ENCODE measurements at regions of chr22 and their contacts with region 1.

Region 1: GRCh38 chr22:39236321-39237317 is 8.2 kb downstream of the PDGFB start:
- DNase-seq: peak; percentile 79 to 91 (median 86)
- ATAC-seq: peak; percentile 23 to 56 (median 53)
- H3K4me3 ChIP-seq: peak overlapping the region in 8 of 12 donors; percentile 8 to 38 (median 19)
- H3K27ac ChIP-seq: peak overlapping the region; percentile 84 to 98 (median 94)
- H3K4me1 ChIP-seq: peaks cover 27 to 98% (median 90%) of the 10 kb centered on the region in 12 donors
- H3K27me3 ChIP-seq: peaks cover 0 to 60% (median 0%) of the 10 kb centered on the region in 9 donors
- CTCF ChIP-seq: no peak
- POLR2A ChIP-seq: no peak

Region 2: GRCh38 chr22:39155421-39155820 is 81.2 kb before region 1 on chr22:
- intact Hi-C with region 1: no loop called
- DNase-seq: no peak
- ATAC-seq: no peak
- H3K4me3 ChIP-seq: no peak overlapping the region
- H3K27ac ChIP-seq: no peak overlapping the region
- H3K4me1 ChIP-seq: peaks cover 0 to 26% (median 18%) of the 10 kb centered on the region in 12 donors
- H3K27me3 ChIP-seq: peaks cover 0 to 15% (median 0%) of the 10 kb centered on the region in 9 donors
- CTCF ChIP-seq: no peak
- POLR2A ChIP-seq: no peak

Region 3: DNA sequence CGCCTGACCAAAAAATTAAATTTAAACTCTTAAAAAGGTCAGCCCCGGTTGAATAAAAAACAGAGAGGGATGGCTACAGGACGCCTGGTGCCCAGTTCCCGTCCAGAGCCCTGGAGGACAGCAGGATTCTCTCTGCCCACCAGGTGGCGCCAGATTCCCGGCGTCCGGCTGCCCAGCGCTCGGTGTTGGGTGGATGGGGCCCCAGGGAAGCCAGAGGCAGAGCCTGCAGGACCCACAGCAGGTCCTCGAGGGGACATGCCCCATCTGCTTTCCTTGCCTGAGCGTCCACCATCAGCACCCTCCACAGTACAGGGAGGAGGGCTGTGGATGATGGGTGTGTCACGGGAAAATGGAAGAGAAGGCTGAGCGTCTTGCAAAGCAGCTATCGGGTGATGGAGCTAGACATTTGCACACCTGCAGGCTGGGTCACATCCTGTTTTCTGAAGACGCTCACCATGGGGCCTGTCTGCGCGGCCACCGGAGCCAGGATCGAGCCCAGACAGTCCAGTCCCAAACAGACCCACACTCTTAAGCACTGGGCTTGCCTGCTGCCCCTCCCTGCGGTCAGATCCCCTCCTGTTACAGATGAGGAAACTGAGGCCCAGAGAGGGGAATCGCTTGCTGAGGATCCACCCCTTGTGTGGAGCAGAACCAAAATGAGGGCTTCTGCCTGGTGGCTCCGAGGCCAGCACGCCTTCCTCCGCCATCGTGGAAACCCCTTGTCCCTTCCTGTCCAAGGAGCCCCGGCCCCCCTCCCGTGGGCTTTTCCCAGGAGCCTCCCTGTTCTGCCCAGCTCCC is 65.6 kb before region 1 on chr22:
- intact Hi-C with region 1: loop called in 8 of 10 experiments (anchors 2 to 5 kb)
- DNase-seq: peak; percentile 81 to 93 (median 84)
- ATAC-seq: peak; percentile 76 to 87 (median 83)
- H3K4me3 ChIP-seq: peak overlapping the region in 4 of 12 donors; percentile 1 to 18 (median 10)
- H3K27ac ChIP-seq: peak overlapping the region in 3 of 12 donors; percentile 25 to 42 (median 40)
- H3K4me1 ChIP-seq: peaks cover 33 to 56% (median 47%) of the 10 kb centered on the region in 12 donors
- H3K27me3 ChIP-seq: no peaks in the 10 kb centered on the region
- CTCF ChIP-seq: peak; percentile 94 to 99 (median 96)
- POLR2A ChIP-seq: no peak

Region 4: GRCh38 chr22:39185601-39186014 is 51.0 kb before region 1 on chr22:
- intact Hi-C with region 1: loop called in 1 of 10 experiments (anchors 5 kb)
- DNase-seq: peak; percentile 71 to 91 (median 87)
- ATAC-seq: peak; percentile 87 to 95 (median 92)
- H3K4me3 ChIP-seq: no peak overlapping the region
- H3K27ac ChIP-seq: peak overlapping the region; percentile 17 to 95 (median 78)
- H3K4me1 ChIP-seq: peaks cover 4 to 29% (median 18%) of the 10 kb centered on the region in 12 donors
- H3K27me3 ChIP-seq: no peaks in the 10 kb centered on the region
- CTCF ChIP-seq: peak in 11 of 12 donors; percentile 36 to 77 (median 51)
- POLR2A ChIP-seq: no peak

Region 5: DNA sequence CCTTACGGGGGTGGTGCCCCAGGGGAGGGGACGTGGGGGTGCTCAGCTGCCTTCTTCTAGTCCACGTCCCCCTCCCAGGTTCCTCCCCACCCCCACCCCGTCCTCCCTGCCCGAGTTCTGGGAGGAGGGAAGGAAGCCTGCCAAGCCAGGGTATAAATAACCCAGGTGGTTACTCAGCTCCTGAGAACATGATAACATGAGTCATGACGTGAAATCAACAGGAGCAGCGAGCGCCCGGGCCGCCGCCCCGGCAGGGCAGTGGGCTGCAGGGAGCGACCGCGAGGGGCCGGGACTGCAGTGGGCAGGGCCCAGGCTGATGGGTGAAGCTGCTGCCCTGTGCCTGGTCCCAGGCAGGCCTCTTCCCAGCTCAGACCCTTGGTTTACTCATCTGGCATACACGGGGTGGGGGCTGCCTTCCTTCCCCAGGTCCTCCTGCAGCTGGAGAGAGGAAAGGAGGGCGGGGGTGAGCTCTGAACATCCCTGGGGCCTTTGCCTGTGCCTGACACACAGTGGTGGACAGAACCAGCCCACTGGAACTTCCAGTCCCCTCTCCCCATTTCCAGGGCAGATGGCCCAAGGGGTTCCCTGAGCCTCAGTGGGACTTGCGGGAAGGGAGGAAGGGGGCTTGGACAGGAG is 16.9 kb after region 1 on chr22:
- intact Hi-C with region 1: no loop called
- DNase-seq: peak; percentile 79 to 88 (median 82)
- ATAC-seq: peak; percentile 59 to 85 (median 84)
- H3K4me3 ChIP-seq: peak overlapping the region in 4 of 12 donors; percentile 13 to 24 (median 19)
- H3K27ac ChIP-seq: peak overlapping the region; percentile 53 to 93 (median 84)
- H3K4me1 ChIP-seq: peaks cover 15 to 44% (median 38%) of the 10 kb centered on the region in 12 donors
- H3K27me3 ChIP-seq: peaks cover 0 to 18% (median 0%) of the 10 kb centered on the region in 9 donors
- CTCF ChIP-seq: peak in 2 of 12 donors; percentile 6 to 8
- POLR2A ChIP-seq: peak in 1 of 2 donors; percentile 39

Region 6: DNA sequence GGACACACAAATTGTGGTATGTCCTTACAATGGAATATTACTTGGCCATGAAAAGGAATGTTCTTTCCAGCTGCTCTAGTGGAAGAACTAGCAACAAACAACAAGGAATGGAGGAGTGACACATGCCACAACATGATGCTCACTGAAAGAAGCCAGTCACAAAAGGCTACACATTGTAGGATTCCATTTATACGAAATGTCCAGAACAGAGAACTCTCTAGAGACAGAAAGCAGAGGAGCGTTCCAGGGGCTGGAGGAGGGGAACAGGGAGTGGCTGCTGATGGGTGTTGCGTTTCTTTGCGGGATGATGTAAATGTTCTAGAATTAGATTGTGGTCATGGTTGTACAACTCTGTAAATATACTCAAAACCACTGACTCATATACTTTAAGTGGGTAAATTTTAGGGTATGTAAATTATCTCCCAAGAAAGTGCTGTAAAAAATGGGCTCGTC is 40.6 kb after region 1 on chr22:
- intact Hi-C with region 1: loop called in 2 of 10 experiments (anchors 1 to 5 kb)
- DNase-seq: no peak
- ATAC-seq: no peak
- H3K4me3 ChIP-seq: no peak overlapping the region
- H3K27ac ChIP-seq: peak overlapping the region; percentile 17 to 83 (median 58)
- H3K4me1 ChIP-seq: peaks cover 0 to 61% (median 18%) of the 10 kb centered on the region in 12 donors
- H3K27me3 ChIP-seq: no peaks in the 10 kb centered on the region
- CTCF ChIP-seq: no peak
- POLR2A ChIP-seq: no peak

Region 7: DNA sequence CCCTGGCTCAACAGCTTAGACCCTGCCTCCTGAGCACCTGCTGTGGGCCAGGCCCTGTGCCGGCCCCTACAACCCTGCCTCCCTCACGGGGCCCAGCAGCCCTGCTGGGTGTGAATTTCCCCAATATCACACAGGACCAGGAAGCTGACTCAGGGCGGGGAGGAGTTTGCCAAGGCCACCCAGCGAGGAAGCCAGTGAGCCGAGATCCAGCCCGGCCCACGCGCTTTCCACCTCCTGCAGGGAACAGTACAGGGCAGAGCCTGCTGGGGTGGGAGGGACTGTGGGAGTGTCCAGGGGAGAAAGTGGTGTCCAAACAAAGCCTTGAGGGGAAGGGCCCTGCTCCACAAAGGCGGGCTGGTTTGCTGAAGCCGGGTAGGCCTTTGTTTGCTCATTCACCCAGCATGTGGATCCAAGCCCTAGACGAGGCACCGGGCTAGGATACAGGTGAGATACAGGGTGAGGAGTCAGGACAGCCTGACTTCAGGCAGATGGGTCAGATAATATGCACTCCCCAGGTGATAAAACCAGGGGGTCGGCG is 56.0 kb after region 1 on chr22:
- intact Hi-C with region 1: loop called in 4 of 10 experiments (anchors 5 kb)
- DNase-seq: peak; percentile 94 to 96 (median 95)
- ATAC-seq: peak; percentile 84 to 92 (median 90)
- H3K4me3 ChIP-seq: no peak overlapping the region
- H3K27ac ChIP-seq: peak overlapping the region; percentile 47 to 94 (median 84)
- H3K4me1 ChIP-seq: peaks cover 20 to 53% (median 40%) of the 10 kb centered on the region in 12 donors
- H3K27me3 ChIP-seq: no peaks in the 10 kb centered on the region
- CTCF ChIP-seq: no peak
- POLR2A ChIP-seq: peak in 1 of 2 donors; percentile 51

Region 8: GRCh38 chr22:39300186-39300830 is 63.7 kb after region 1 on chr22:
- intact Hi-C with region 1: loop called in 4 of 10 experiments (anchors 5 kb)
- DNase-seq: peak; percentile 65 to 79 (median 71)
- ATAC-seq: peak; percentile 56 to 77 (median 74)
- H3K4me3 ChIP-seq: peak overlapping the region in 10 of 12 donors; percentile 1 to 30 (median 26)
- H3K27ac ChIP-seq: peak overlapping the region; percentile 59 to 87 (median 66)
- H3K4me1 ChIP-seq: peaks cover 6 to 56% (median 43%) of the 10 kb centered on the region in 12 donors
- H3K27me3 ChIP-seq: no peaks in the 10 kb centered on the region
- CTCF ChIP-seq: peak in 5 of 12 donors; percentile 9 to 30 (median 16)
- POLR2A ChIP-seq: no peak

Region 9: DNA sequence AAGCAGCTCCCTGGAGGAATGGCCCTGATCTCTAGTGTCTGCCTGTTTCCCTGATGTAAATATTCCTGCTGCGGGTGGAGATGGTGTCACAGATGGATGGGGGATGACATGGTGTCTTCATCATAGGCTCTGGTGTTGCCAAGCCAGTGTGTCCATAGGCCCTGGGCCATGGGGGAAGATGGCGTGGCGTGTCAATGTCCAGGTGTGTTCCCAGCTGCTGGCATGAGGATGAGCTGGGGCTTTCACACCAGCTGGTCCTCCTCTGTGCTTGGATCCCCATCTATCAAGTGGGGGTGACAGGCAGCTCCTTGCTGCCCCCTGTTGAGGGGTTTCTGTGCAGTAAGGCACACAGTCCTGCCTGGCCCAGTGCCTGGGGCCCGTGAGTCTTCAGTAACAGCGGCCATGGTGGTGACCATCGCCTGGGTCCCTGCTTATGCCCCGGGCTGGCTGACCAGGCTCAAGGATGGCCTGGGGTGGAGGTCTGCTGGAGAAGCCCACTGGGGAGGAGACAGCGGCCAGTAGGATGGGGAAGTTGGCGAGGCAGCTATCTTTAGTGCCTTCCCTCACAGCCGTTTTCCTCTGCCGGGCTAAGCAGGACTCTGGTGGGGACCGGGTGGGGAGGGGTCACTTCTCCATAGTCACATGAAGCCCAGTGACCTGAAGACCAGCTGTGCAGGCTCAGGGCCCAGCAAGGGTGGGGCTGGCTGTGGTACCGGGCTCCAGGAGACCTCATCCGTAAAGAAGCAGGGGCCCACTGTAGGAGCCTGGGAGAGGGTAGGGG is 70.2 kb after region 1 on chr22:
- intact Hi-C with region 1: loop called in 8 of 10 experiments (anchors 5 kb)
- DNase-seq: peak in 2 of 5 donors; percentile 66 to 68
- ATAC-seq: peak in 2 of 4 donors; percentile 14 to 43
- H3K4me3 ChIP-seq: no peak overlapping the region
- H3K27ac ChIP-seq: peak overlapping the region in 3 of 12 donors; percentile 24 to 54 (median 48)
- H3K4me1 ChIP-seq: peaks cover 0 to 34% (median 19%) of the 10 kb centered on the region in 12 donors
- H3K27me3 ChIP-seq: no peaks in the 10 kb centered on the region
- CTCF ChIP-seq: peak; percentile 21 to 54 (median 44)
- POLR2A ChIP-seq: no peak

Region 10: DNA sequence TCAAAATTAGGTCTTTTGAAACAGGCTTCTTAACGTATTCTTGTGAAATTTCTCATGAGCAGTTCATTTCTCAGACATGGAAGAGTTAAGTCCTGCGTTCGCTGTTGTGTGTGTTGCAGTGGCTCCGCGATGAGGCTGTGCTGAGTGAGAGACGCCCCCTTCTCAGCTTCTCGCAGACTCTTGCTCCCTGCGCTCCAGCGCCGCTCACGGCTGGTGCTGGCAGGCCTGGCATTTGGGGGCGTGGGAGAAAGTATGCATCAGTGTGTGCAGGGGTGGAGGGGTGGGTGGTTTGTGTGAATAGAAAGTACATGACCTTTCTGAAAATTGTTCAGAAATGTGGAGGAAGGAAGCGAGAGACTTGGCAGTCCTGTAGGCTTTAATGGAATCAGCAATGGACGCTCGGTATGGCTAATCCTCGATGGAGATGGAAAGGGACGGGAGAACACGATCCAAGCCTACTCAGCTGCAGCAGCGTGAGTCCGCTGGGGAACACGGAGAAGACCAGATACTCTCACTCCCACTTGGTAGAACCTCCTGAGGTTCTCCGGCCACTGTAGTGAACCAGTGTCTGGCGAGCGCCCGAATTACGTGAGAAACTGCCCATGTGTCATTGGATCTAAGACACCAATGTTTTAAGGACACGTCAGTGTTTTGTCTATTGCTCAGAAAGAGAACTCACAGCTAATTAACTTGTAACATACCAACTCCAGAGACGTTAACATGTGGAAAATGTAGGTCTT is 168.9 kb after region 1 on chr22:
- intact Hi-C with region 1: no loop called
- DNase-seq: peak in 1 of 5 donors; percentile 26
- ATAC-seq: peak; percentile 34 to 64 (median 62)
- H3K4me3 ChIP-seq: peak overlapping the region in 5 of 12 donors; percentile 12 to 32 (median 22)
- H3K27ac ChIP-seq: peak overlapping the region in 5 of 12 donors; percentile 3 to 51 (median 28)
- H3K4me1 ChIP-seq: peaks cover 0 to 44% (median 20%) of the 10 kb centered on the region in 12 donors
- H3K27me3 ChIP-seq: no peaks in the 10 kb centered on the region
- CTCF ChIP-seq: peak in 1 of 12 donors; percentile 17
- POLR2A ChIP-seq: no peak